Esophagus muscularis mucosa (tissue), 4 donors: ENCODE measurements at regions of chr14 and their contacts with region 1.

Region 1: GRCh38 chr14:100383727-100384158 is 60.6 kb downstream of the SLC25A47 start:
- DNase-seq: no peak
- H3K4me3 ChIP-seq: no peak overlapping the region
- H3K27ac ChIP-seq: no peak overlapping the region
- H3K4me1 ChIP-seq: peaks cover 3 to 18% (median 8%) of the 10 kb centered on the region in 4 donors
- H3K27me3 ChIP-seq: no peaks in the 10 kb centered on the region
- CTCF ChIP-seq: peak; percentile 62 to 77 (median 63)
- EP300 ChIP-seq: no peak
- POLR2A ChIP-seq: no peak

Region 2: GRCh38 chr14:100285021-100285912 is 98.5 kb before region 1 on chr14:
- intact Hi-C with region 1: no loop called
- DNase-seq: no peak
- H3K4me3 ChIP-seq: peak overlapping the region; percentile 81 to 95 (median 87)
- H3K27ac ChIP-seq: peak overlapping the region; percentile 91 to 93 (median 92)
- H3K4me1 ChIP-seq: peaks cover 17 to 45% (median 30%) of the 10 kb centered on the region in 4 donors
- H3K27me3 ChIP-seq: no peaks in the 10 kb centered on the region
- CTCF ChIP-seq: peak; percentile 63 to 84 (median 70)
- EP300 ChIP-seq: no peak
- POLR2A ChIP-seq: no peak

Region 3: DNA sequence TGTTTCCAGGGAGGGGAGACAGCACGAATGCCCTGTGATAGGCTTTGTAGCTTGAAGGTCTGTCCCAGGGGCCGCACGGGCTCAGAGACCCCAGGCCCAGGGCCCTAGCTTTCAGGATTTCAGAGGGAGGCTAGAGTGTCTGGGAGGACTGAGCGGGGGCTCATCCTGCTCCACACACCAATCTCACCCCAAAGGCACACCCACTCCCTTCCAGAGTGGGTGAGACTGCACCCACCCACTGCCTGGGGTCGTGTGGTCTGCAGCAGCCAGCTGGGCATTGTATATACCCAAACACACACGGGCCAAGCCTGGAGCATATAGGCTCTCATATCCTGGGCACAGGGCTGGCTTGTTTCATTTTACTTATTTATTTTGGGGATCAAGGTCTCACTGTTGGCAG is 66.4 kb before region 1 on chr14:
- intact Hi-C with region 1: no loop called
- DNase-seq: no peak
- H3K4me3 ChIP-seq: no peak overlapping the region
- H3K27ac ChIP-seq: no peak overlapping the region
- H3K4me1 ChIP-seq: peaks cover 11 to 18% (median 12%) of the 10 kb centered on the region in 4 donors
- H3K27me3 ChIP-seq: peaks cover 0 to 5% (median 0%) of the 10 kb centered on the region in 4 donors
- CTCF ChIP-seq: no peak
- EP300 ChIP-seq: no peak
- POLR2A ChIP-seq: no peak

Region 4: GRCh38 chr14:100428727-100429126 is 45.0 kb after region 1 on chr14:
- intact Hi-C with region 1: no loop called
- DNase-seq: no peak
- H3K4me3 ChIP-seq: no peak overlapping the region
- H3K27ac ChIP-seq: no peak overlapping the region
- H3K4me1 ChIP-seq: peaks cover 0 to 6% (median 2%) of the 10 kb centered on the region in 4 donors
- H3K27me3 ChIP-seq: no peaks in the 10 kb centered on the region
- CTCF ChIP-seq: no peak
- EP300 ChIP-seq: no peak
- POLR2A ChIP-seq: no peak

Region 5: GRCh38 chr14:100454437-100454836 is 70.7 kb after region 1 on chr14:
- intact Hi-C with region 1: no loop called
- DNase-seq: no peak
- H3K4me3 ChIP-seq: no peak overlapping the region
- H3K27ac ChIP-seq: no peak overlapping the region
- H3K4me1 ChIP-seq: no peaks in the 10 kb centered on the region
- H3K27me3 ChIP-seq: no peaks in the 10 kb centered on the region
- CTCF ChIP-seq: no peak
- EP300 ChIP-seq: no peak
- POLR2A ChIP-seq: no peak

Region 6: GRCh38 chr14:100524933-100525243 is 141.1 kb after region 1 on chr14:
- intact Hi-C with region 1: loop called (anchors 5 kb)
- DNase-seq: peak; percentile 88
- H3K4me3 ChIP-seq: no peak overlapping the region
- H3K27ac ChIP-seq: no peak overlapping the region
- H3K4me1 ChIP-seq: no peaks in the 10 kb centered on the region
- H3K27me3 ChIP-seq: no peaks in the 10 kb centered on the region
- CTCF ChIP-seq: peak; percentile 48 to 56 (median 51)
- EP300 ChIP-seq: no peak
- POLR2A ChIP-seq: no peak

Region 7: DNA sequence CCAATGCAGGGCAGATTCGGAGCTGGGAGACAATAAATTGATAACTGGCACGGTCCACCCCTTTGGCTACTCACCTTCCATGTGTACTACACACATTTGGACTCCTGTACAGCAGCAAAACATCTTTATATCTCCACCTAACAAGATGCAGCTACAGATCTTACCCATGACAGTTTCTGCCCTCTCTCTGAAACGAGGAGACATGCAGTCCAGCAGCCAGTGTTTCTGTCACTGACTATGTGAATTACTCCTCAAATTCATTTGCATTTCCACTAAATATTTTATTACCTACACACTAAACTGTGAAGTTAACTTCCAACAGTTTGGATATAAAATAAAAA is 262.2 kb after region 1 on chr14:
- intact Hi-C with region 1: loop called (anchors 2 kb)
- DNase-seq: no peak
- H3K4me3 ChIP-seq: no peak overlapping the region
- H3K27ac ChIP-seq: no peak overlapping the region
- H3K4me1 ChIP-seq: peaks cover 0 to 6% (median 4%) of the 10 kb centered on the region in 4 donors
- H3K27me3 ChIP-seq: peaks cover 0 to 5% (median 0%) of the 10 kb centered on the region in 4 donors
- CTCF ChIP-seq: no peak
- EP300 ChIP-seq: no peak
- POLR2A ChIP-seq: no peak